ENCODE measurements at regions of chr12 and their contacts with region 1.

Region 1: DNA sequence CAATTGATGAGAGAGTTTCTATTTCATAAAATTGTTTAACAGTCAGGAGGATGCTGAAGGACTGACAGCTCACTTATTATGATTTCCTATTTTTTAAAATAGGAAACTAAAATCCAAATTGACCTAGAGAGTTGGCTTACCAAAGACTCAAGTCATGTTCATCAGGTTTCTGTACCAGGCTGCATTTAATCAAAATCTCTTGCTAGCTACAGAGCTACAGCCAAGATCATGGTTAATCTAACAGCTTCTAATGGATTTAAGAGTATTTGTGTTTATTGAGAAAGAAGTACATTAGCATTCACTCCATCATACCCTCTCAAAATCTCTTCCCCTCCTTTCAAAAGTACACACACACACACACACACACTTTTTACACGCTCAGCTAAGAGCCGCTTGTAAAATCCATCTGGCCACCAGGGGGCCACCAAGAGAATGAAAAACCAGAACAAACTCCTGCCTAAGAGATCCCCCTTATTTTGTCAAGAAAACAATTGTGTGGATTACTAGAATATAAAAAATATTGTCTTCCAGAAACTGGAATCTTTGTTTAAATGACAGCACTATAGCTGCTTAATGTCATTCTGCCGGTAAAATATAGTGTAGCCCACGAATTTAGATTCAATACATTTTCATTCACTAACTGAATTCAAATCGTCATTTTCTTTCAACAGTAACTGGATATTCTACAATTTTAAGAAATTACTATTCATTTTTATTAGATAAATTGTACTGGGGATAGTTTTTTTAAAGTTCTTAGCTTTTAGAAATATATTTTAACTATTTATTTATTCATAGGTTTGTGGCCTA is 334.0 kb downstream of the BTG1 start:
- DNase-seq: peak; percentile 67
- ATAC-seq: peak; percentile 66
- H3K4me3 Mint-ChIP-seq: no peak overlapping the region
- H3K27ac Mint-ChIP-seq: no peak overlapping the region
- H3K4me1 Mint-ChIP-seq: peaks cover 5% of the 10 kb centered on the region
- H3K27me3 Mint-ChIP-seq: no peaks in the 10 kb centered on the region

Region 2: GRCh38 chr12:91722072-91722471 is 89.6 kb before region 1 on chr12:
- CTCF ChIA-PET with region 1: no interaction called
- DNase-seq: peak; percentile 48
- ATAC-seq: peak; percentile 55
- H3K4me3 Mint-ChIP-seq: no peak overlapping the region
- H3K27ac Mint-ChIP-seq: no peak overlapping the region
- H3K4me1 Mint-ChIP-seq: peaks cover 3% of the 10 kb centered on the region
- H3K27me3 Mint-ChIP-seq: no peaks in the 10 kb centered on the region

Region 3: GRCh38 chr12:91785655-91786498 is 25.8 kb before region 1 on chr12:
- CTCF ChIA-PET with region 1: interaction called, 13 read pairs
- DNase-seq: no peak
- ATAC-seq: no peak
- H3K4me3 Mint-ChIP-seq: no peak overlapping the region
- H3K27ac Mint-ChIP-seq: no peak overlapping the region
- H3K4me1 Mint-ChIP-seq: peaks cover 11% of the 10 kb centered on the region
- H3K27me3 Mint-ChIP-seq: no peaks in the 10 kb centered on the region

Region 4: GRCh38 chr12:91854725-91855124 is 43.0 kb after region 1 on chr12:
- CTCF ChIA-PET with region 1: no interaction called
- DNase-seq: no peak
- ATAC-seq: no peak
- H3K4me3 Mint-ChIP-seq: no peak overlapping the region
- H3K27ac Mint-ChIP-seq: no peak overlapping the region
- H3K4me1 Mint-ChIP-seq: peaks cover 10% of the 10 kb centered on the region
- H3K27me3 Mint-ChIP-seq: no peaks in the 10 kb centered on the region

Region 5: GRCh38 chr12:92145731-92146496 is 334.2 kb after region 1 on chr12 and contains the start of gene BTG1:
- CTCF ChIA-PET with region 1: interaction called, 11 read pairs
- DNase-seq: peak; percentile 100
- ATAC-seq: peak; percentile 74
- H3K4me3 Mint-ChIP-seq: peak within 1 kb of the TSS; percentile 94
- H3K27ac Mint-ChIP-seq: peak within 1 kb of the TSS; percentile 94
- H3K4me1 Mint-ChIP-seq: peaks cover 19% of the 10 kb centered on the region
- H3K27me3 Mint-ChIP-seq: no peaks in the 10 kb centered on the region
- total RNA-seq, gene BTG1: 91.7 to 132 TPM